ENCODE measurements at regions of chr7 and their contacts with region 1.

Region 1: GRCh38 chr7:98399890-98400541 is 874 bp downstream of the BAIAP2L1 start:
- DNase-seq: no peak
- H3K4me3 Mint-ChIP-seq: peak overlapping the region; percentile 82
- H3K27ac Mint-ChIP-seq: peak overlapping the region; percentile 79
- H3K4me1 Mint-ChIP-seq: peaks cover 18% of the 10 kb centered on the region
- H3K27me3 Mint-ChIP-seq: no peaks in the 10 kb centered on the region
- CTCF ChIP-seq: no peak

Region 2: GRCh38 chr7:97667359-97667758 is 732.7 kb before region 1 on chr7:
- CTCF ChIA-PET with region 1: no interaction called
- intact Hi-C with region 1: no loop called
- DNase-seq: no peak
- H3K4me3 Mint-ChIP-seq: no peak overlapping the region
- H3K27ac Mint-ChIP-seq: no peak overlapping the region
- H3K4me1 Mint-ChIP-seq: no peaks in the 10 kb centered on the region
- H3K27me3 Mint-ChIP-seq: peaks cover 61% of the 10 kb centered on the region
- CTCF ChIP-seq: no peak

Region 3: GRCh38 chr7:98266840-98267239 is 133.2 kb before region 1 on chr7:
- CTCF ChIA-PET with region 1: no interaction called
- intact Hi-C with region 1: no loop called
- DNase-seq: no peak
- H3K4me3 Mint-ChIP-seq: no peak overlapping the region
- H3K27ac Mint-ChIP-seq: no peak overlapping the region
- H3K4me1 Mint-ChIP-seq: peaks cover 8% of the 10 kb centered on the region
- H3K27me3 Mint-ChIP-seq: no peaks in the 10 kb centered on the region
- CTCF ChIP-seq: no peak

Region 4: DNA sequence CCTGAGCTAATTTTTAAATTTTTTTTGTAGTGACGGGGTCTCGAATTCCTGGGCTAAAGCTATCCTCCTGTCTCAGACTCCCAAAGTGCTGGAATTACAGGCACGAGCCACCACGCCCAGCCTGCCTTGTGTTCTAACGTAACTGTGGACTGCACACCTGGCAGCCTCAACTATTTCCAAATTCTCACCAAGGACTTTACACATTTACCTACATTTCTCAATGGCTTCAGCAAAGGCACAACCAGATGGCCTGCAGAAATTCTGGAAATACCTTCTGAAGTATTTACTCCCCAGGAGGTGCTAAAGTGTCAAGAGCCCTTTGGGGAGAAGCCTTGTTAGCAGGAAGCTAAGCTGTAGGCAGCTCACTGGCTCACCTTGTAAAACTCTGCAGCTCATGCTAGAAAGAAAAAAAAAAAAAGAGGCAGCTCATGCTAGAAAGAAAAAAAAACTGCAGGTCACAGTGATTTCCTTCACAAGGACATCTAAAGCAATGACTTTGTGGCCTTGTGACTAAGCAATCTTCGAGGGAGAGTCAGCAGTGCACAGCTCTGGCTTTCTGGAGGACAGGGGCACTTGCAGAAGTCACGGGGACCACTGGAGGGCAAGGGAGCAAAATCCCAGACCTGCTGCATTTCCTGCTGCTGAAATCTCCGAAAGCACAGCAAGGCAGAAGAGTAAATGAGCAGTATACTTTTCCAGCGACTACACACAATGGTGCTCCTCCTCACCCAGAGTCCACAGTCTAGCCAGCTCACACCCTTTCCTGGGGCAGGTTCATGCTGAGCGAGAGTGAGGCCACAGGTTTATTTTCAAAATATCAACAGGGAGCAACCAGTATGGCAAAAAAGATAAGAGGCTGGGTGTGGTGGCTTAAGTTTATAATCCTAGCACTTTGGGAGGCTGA is 39.5 kb before region 1 on chr7:
- CTCF ChIA-PET with region 1: interaction called, 3 read pairs
- intact Hi-C with region 1: loop called (anchors 5 kb)
- DNase-seq: peak; percentile 21
- H3K4me3 Mint-ChIP-seq: peak overlapping the region; percentile 12
- H3K27ac Mint-ChIP-seq: peak overlapping the region; percentile 68
- H3K4me1 Mint-ChIP-seq: peaks cover 22% of the 10 kb centered on the region
- H3K27me3 Mint-ChIP-seq: no peaks in the 10 kb centered on the region
- CTCF ChIP-seq: no peak

Region 5: DNA sequence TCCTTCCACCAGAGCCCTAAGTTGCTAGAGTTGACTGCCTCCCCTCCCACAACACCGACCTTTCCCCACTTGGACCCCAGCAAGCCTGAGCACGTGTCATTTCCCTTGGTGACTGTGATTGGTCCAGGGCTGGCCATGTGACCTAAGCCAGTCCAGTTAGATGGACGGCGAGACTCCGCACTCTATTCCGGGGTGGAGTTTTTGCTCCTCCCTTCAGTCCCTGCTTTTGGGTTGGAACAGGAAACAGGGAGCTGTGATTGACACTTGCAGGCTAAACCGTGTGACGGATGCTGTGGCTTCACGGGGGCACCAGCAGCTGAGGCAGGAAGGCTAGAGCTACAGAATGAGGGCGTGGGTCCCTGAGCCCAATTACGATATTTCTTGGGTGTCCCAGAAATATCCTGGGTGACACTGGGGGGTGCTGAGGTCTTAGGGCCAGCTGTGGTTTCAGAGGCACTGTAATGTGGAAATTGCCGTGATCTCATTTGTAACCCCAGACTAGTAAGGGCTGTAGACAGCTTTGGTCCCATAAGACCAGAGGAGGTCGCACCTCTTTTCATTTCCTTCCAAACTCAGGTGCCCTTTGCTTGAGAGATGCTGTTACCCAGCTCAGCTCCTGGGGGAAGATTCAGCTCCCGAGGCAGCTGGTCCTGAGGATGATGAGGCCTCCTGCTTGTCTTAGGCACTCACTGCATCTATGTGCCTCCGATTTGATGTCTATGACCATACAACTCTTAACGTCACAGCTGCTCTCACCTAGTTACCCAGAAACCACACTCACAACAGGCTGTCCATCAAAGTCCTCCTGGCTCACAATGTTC is 114.4 kb after region 1 on chr7:
- CTCF ChIA-PET with region 1: no interaction called
- intact Hi-C with region 1: no loop called
- DNase-seq: no peak
- H3K4me3 Mint-ChIP-seq: no peak overlapping the region
- H3K27ac Mint-ChIP-seq: no peak overlapping the region
- H3K4me1 Mint-ChIP-seq: no peaks in the 10 kb centered on the region
- H3K27me3 Mint-ChIP-seq: peaks cover 20% of the 10 kb centered on the region
- CTCF ChIP-seq: no peak